Posterior vena cava (tissue), 2 donors: ENCODE measurements at regions of chr19 and their contacts with region 1.

Region 1: DNA sequence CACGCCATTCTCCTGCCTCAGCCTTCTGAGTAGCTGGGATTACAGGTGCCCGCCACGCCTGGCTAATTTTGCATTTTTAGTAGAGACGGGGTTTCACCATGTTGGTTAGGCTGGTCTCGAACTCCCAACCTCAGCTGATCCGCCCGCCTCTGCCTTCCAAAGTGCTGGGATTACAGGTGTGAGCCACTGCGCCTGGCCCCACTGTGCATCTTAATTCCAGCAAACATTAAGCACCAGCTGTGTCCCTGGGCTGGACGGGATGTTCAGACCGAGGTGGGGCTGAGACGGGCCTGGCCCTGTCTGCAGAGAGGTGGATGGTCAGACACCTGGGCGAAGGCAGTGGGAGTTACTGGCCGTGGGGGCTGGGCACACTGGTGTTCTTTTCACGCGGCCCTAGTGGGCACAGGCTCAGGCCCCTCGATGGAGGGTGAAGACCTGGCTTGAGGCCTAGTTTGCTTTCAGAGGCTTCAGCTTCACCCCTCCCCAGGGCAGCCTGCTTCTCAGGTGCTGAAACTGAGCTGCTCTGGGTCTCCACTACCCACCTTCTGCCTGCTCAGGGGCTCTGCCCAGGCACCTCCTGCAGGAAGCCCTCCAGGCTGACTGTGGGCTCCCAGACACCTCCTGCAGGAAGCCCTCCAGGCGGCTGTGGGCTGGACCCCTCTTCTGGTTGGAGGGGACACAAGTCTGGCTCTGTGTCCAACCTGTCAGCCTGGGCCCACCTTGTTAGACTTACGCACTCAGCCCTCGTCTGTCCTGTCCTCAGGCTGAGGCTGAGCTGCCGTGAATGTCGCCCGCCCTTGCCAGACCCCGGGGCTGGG is 21.0 kb downstream of the PALM start:
- DNase-seq: no peak

Region 2: GRCh38 chr19:662962-663681 is 66.7 kb before region 1 on chr19 and contains the start of gene RNF126:
- intact Hi-C with region 1: loop called (anchors 2 kb)
- DNase-seq: peak; percentile 98
- total RNA-seq, gene RNF126: 24.5 to 27.1 TPM

Region 3: DNA sequence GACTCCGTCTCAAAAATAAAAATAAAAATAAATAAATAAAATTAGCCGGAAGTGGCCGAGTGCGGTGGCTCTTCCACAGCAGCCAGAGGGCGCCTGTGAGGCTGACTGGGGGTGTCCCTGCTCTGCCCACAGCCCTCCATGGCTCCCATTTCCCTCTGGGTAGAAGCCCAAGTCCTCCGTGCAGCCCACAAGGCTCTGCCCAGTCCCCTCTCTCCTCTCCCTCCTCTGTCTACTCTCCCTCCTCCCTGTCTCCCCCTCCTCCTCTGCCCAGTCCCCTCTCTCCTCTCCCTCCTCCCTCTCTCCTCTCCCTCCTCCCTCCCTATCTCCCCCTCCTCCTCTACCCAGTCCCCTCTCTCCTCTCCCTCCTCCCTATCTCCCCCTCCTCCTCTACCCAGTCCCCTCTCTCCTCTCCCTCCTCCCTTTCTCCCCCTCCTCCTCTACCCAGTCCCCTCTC is 41.6 kb after region 1 on chr19:
- intact Hi-C with region 1: no loop called
- DNase-seq: no peak